ENCODE measurements at regions of chr12 and their contacts with region 1.

Region 1: DNA sequence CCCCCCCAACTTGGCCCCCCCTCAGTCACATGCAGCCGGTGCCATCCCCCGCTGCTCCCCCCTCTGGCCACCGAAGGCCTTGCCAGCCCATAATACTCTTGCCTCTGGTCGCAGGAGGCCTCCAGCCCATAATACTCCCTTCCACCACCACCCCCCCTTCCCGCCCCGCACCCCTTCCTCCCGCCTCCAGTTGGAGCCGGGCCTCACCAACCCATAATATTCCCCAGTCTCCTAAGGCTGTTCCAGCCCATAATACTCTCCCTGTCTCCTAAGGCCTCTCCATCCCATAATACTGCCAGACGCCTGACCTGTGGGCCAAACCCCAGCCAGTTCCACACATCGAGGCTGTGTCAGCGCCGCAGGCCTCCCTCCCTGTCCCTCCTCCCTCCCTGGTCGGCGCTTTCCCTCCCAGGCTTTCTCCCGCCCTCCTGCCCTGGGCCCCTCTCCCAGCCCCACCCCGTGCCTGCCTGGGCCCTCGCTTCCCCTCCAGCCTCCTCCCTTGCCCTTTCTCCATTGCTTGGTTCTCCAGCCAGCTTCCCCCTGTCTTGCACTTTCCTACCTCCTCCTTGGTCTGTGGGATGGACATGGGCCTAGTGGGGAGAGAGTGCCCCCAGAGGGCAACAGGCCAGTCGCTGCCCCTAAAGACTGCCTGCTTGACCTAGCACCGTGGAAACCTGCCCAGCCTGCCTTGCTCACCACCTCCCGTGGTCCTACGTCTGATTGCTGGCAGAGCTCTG is 6.8 kb upstream of the CHD4 start:
- DNase-seq: peak; percentile 97
- ATAC-seq: peak; percentile 88
- H3K4me3 ChIP-seq: peak overlapping the region; percentile 11 to 70 (median 41); a peak in 5 of 6 replicates
- H3K27ac ChIP-seq: peak overlapping the region; percentile 74
- H3K4me1 ChIP-seq: peaks cover 41% of the 10 kb centered on the region
- H3K27me3 ChIP-seq: no peaks in the 10 kb centered on the region
- CTCF ChIP-seq: peak; percentile 75
- EP300 ChIP-seq: no peak
- POLR2A ChIP-seq: peak; percentile 41 to 75; a peak in 3 of 4 replicates
- RAD21 ChIP-seq: no peak

Region 2: DNA sequence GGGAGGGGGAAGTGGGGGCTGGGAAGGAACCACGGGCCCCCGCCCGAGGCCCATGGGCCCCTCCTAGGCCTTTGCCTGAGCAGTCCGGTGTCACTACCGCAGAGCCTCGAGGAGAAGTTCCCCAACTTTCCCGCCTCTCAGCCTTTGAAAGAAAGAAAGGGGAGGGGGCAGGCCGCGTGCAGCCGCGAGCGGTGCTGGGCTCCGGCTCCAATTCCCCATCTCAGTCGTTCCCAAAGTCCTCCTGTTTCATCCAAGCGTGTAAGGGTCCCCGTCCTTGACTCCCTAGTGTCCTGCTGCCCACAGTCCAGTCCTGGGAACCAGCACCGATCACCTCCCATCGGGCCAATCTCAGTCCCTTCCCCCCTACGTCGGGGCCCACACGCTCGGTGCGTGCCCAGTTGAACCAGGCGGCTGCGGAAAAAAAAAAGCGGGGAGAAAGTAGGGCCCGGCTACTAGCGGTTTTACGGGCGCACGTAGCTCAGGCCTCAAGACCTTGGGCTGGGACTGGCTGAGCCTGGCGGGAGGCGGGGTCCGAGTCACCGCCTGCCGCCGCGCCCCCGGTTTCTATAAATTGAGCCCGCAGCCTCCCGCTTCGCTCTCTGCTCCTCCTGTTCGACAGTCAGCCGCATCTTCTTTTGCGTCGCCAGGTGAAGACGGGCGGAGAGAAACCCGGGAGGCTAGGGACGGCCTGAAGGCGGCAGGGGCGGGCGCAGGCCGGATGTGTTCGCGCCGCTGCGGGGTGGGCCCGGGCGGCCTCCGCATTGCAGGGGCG is 79.8 kb before region 1 on chr12 and contains the start of gene GAPDH:
- CTCF ChIA-PET with region 1: no interaction called
- POLR2A ChIA-PET with region 1: interaction called, 20 read pairs
- in situ Hi-C with region 1: no loop called
- intact Hi-C with region 1: no loop called
- DNase-seq: peak; percentile 95
- ATAC-seq: peak; percentile 69
- H3K4me3 ChIP-seq: peak within 1 kb of the TSS; percentile 94 to 99 (median 97)
- H3K27ac ChIP-seq: peak within 1 kb of the TSS; percentile 97
- H3K4me1 ChIP-seq: peaks cover 53% of the 10 kb centered on the region
- H3K27me3 ChIP-seq: no peaks in the 10 kb centered on the region; a peak in 1 of 5 replicates
- CTCF ChIP-seq: no peak
- EP300 ChIP-seq: peak; percentile 14 to 26; a peak in 2 of 4 replicates
- POLR2A ChIP-seq: peak in 1 of 2 experiments; percentile 98; a peak in 2 of 4 replicates
- RAD21 ChIP-seq: no peak
- total RNA-seq, gene GAPDH: 3,038 and 4,052 TPM in 2 replicates

Region 3: DNA sequence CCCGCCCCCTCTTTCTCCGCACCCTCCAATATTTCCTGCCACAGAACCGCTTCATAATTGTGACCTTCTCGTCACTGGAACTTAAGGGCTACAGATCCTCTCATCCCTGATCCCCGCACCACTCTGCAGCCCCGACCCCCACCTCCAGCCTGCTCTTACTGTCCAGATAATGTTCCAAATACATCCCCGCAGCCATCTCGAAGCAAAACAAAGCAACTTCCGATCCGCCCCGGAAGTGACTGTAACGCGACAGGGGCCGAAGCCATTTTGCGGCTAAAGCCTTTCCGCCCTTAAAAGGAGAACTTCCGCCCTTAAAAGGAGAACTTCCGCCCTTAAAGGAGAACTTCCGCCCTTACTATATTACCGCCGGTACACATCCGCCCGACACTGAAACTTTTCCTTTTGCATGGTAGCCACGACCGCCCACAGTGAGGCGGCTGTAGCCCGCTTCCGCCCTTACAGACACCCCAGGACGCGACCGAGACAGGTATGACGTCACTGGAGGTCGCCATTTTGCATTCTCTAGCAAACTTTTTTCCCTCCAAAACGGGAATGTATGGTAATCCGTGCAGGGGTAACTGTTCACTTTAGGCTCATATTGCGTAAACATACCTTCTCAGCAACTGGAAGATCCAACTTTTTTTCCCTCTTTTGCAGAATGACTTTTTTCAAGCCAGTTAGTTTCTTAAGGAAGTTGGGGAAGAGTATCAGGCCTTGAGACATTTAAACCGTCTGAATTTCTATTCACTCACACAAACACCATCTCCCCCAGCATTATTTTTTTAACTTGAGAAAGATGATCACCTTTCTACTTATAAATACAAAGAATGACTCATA is 49.2 kb after region 1 on chr12 and contains the start of gene ING4:
- CTCF ChIA-PET with region 1: no interaction called
- POLR2A ChIA-PET with region 1: no interaction called
- in situ Hi-C with region 1: no loop called
- intact Hi-C with region 1: loop called (anchors 2 kb)
- DNase-seq: peak; percentile 99
- ATAC-seq: peak; percentile 99
- H3K4me3 ChIP-seq: peak within 1 kb of the TSS; percentile 77 to 92 (median 87)
- H3K27ac ChIP-seq: peak within 1 kb of the TSS; percentile 72
- H3K4me1 ChIP-seq: peaks cover 18% of the 10 kb centered on the region
- H3K27me3 ChIP-seq: no peaks in the 10 kb centered on the region; a peak in 1 of 5 replicates
- CTCF ChIP-seq: no peak
- EP300 ChIP-seq: peak in 1 of 2 experiments; percentile 39; a peak in 2 of 4 replicates
- POLR2A ChIP-seq: peak; percentile 42 to 52; a peak in 3 of 4 replicates
- RAD21 ChIP-seq: 0 out of 2 replicates have a peak, but pooled peaks have one; percentile 12
- total RNA-seq, gene ING4: 12.7 and 14.4 TPM in 2 replicates

Region 4: DNA sequence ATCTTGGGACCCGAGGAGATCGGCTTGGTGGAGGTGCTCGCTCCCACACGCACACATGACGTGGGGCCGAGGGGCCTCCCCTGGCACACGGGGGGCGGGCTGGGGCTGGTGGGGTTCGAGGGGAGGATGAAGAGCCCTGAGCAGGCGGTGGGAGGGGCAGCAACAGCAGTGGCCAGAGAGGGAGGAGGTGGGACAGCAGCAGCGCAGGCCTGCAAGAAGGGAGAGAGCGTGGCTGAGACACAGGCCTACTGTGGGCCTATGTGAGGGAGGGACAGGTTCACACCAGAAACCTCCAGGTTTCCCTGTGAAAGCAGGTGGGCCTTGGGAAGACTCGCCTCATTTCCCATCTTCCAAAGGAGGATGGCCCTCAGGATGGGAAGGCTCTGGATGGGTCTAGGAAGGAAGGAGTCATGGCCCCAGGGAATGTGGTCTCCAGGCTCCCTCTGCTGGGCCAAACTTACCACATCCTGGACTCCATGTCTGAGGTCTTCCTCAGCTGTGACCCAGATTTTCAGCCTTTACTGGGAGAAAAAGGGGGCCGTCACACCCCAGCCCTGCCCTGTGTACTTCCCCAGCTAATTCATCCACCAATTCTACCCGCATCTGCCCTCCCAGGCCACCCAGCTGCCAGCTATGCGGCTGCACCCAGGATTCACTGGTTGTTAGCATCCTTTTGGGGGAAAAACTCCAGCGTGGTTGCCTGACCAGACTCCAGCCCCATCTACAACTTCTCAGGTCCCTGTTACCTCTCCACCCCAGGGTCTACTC is 83.8 kb after region 1 on chr12:
- CTCF ChIA-PET with region 1: interaction called, 33 read pairs
- POLR2A ChIA-PET with region 1: no interaction called
- in situ Hi-C with region 1: loop called (anchors 5 kb)
- intact Hi-C with region 1: loop called (anchors 2 kb)
- DNase-seq: peak; percentile 45
- ATAC-seq: peak; percentile 84
- H3K4me3 ChIP-seq: no peak overlapping the region
- H3K27ac ChIP-seq: no peak overlapping the region
- H3K4me1 ChIP-seq: peaks cover 24% of the 10 kb centered on the region
- H3K27me3 ChIP-seq: peaks cover 9 to 68% of the 10 kb centered on the region in 2 experiments
- CTCF ChIP-seq: peak; percentile 86
- EP300 ChIP-seq: no peak
- POLR2A ChIP-seq: no peak
- RAD21 ChIP-seq: peak; percentile 82

Region 5: DNA sequence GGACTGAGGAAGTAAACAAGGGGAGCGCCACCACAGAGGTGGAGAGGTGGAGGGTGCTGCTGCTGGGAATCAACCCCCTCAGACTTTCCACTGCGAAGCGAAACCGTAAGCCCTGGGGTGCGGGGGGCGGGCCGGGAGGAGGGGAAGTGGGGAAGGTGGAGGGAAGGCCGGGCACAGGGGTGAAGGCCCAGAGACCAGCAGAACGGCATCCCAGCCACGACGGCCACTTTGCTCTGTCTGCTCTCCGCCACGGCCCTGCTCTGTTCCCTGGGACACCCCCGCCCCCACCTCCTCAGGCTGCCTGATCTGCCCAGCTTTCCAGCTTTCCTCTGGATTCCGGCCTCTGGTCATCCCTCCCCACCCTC is 158.4 kb after region 1 on chr12 and contains the start of gene LAG3:
- CTCF ChIA-PET with region 1: no interaction called
- POLR2A ChIA-PET with region 1: no interaction called
- in situ Hi-C with region 1: no loop called
- intact Hi-C with region 1: no loop called
- DNase-seq: no peak
- ATAC-seq: no peak
- H3K4me3 ChIP-seq: no peak within 1 kb of the TSS
- H3K27ac ChIP-seq: no peak within 1 kb of the TSS
- H3K4me1 ChIP-seq: peaks cover 82% of the 10 kb centered on the region
- H3K27me3 ChIP-seq: no peaks in the 10 kb centered on the region
- CTCF ChIP-seq: no peak
- EP300 ChIP-seq: no peak
- POLR2A ChIP-seq: no peak
- RAD21 ChIP-seq: no peak
- total RNA-seq, gene LAG3: 0.11 TPM in 1 of 2 replicates, not detected in the other

Region 6: GRCh38 chr12:6825398-6826124 is 211.6 kb after region 1 on chr12:
- CTCF ChIA-PET with region 1: interaction called, 3 read pairs
- POLR2A ChIA-PET with region 1: interaction called, 4 read pairs
- in situ Hi-C with region 1: no loop called
- intact Hi-C with region 1: loop called (anchors 10 kb)
- DNase-seq: peak; percentile 67
- ATAC-seq: peak; percentile 65
- H3K4me3 ChIP-seq: no peak overlapping the region
- H3K27ac ChIP-seq: no peak overlapping the region
- H3K4me1 ChIP-seq: peaks cover 34% of the 10 kb centered on the region
- H3K27me3 ChIP-seq: peaks cover 2 to 6% of the 10 kb centered on the region in 2 experiments; a peak in 3 of 5 replicates
- CTCF ChIP-seq: peak; percentile 95
- EP300 ChIP-seq: no peak
- POLR2A ChIP-seq: no peak
- RAD21 ChIP-seq: peak; percentile 85